HCT116 (cell line): ENCODE measurements at regions of chr10 and their contacts with region 1.

Region 1: DNA sequence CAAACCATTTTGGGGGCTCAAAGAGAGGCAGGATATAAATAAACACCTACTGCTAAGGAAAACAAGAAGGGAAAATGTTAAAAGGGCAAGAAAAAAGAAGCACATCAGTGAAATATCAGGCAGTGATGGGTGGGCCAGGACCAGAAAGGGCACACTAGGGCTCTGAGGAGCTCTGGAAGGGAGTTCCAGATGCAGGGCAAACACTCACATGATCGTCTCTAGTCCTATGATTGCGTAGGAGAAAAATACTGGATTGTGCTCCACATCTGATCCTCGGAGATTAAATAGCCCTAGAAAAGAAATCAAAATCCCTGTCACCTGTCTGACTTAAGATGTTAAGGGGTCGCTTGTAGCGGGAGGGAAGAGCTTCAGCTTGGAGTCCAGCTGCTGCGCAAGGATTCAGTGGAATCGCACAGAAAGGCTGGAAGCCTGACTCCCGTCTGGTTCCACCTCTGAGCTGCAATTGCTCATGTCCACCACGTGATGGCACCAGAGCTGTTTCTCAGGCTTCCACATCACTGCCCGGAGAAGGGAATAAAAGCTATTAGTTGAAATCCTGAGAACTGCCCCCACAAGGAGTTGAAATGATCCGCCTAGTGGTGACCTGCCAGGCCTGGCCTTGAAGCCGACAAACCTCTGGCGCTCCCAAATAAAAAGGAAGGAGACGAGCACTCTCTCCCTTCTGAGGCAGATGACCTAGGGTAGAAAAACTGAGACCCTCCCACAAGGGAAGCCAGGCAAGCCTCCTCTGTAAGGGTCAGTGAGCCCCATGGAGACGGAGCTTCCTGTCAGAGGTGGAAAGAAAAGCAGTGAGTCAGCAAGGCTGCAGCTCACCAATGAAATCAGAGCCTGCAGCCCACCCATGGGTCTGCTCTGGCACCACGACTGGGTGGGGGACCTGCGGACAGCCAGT is 39.2 kb downstream of the XPNPEP1 start:
- DNase-seq: peak; percentile 88
- ATAC-seq: peak; percentile 94
- H3K4me3 ChIP-seq: no peak overlapping the region
- H3K27ac ChIP-seq: peak overlapping the region; percentile 50
- H3K4me1 ChIP-seq: peaks cover 7 to 8% of the 10 kb centered on the region in 2 experiments
- H3K27me3 ChIP-seq: no peaks in the 10 kb centered on the region
- CTCF ChIP-seq: peak; percentile 98 to 100 (median 99)
- POLR2A ChIP-seq: no peak
- RAD21 ChIP-seq: peak; percentile 97

Region 2: GRCh38 chr10:109978481-109978880 is 94.4 kb after region 1 on chr10:
- CTCF ChIA-PET with region 1: interaction called, 10 read pairs
- POLR2A ChIA-PET with region 1: no interaction called
- RAD21 ChIA-PET with region 1: no interaction called
- intact Hi-C with region 1: no loop called
- DNase-seq: peak; percentile 37
- ATAC-seq: peak; percentile 87
- H3K4me3 ChIP-seq: no peak overlapping the region
- H3K27ac ChIP-seq: no peak overlapping the region
- H3K4me1 ChIP-seq: no peaks in the 10 kb centered on the region
- H3K27me3 ChIP-seq: 0 out of 2 replicates have a peak, but pooled peaks cover 5% of the 10 kb centered on the region
- CTCF ChIP-seq: peak; percentile 70 to 99 (median 93)
- POLR2A ChIP-seq: no peak
- RAD21 ChIP-seq: peak; percentile 69

Region 3: GRCh38 chr10:110016039-110016438 is 131.9 kb after region 1 on chr10:
- CTCF ChIA-PET with region 1: interaction called, 17 read pairs
- POLR2A ChIA-PET with region 1: no interaction called
- RAD21 ChIA-PET with region 1: interaction called, 6 to 9 read pairs
- intact Hi-C with region 1: loop called (anchors 1 kb)
- DNase-seq: no peak
- ATAC-seq: peak; percentile 81
- H3K4me3 ChIP-seq: no peak overlapping the region
- H3K27ac ChIP-seq: no peak overlapping the region
- H3K4me1 ChIP-seq: peaks cover 18 to 26% of the 10 kb centered on the region in 2 experiments
- H3K27me3 ChIP-seq: no peaks in the 10 kb centered on the region
- CTCF ChIP-seq: peak; percentile 31 to 61 (median 39); a peak in 4 of 6 replicates
- POLR2A ChIP-seq: no peak
- RAD21 ChIP-seq: peak; percentile 62

Region 4: DNA sequence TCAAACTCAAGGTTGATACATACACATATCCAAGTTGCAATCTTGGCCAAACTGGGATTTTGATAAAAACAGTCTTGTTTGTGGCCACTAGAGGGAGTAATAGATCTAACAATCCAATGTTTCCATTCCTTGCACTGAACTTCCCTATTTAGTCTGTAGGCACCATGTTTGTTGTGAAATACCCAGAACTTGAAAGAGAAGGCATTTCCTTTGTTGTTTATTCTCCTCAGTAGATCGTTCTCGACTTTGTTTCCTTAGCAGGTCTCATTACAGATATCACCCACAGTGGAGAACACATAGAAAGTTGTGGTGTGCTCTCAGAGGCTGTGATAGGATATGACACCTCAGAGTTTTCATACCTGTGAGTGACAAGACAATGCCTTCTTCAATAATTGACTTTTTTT is 253.0 kb after region 1 on chr10:
- CTCF ChIA-PET with region 1: interaction called, 16 read pairs
- POLR2A ChIA-PET with region 1: no interaction called
- RAD21 ChIA-PET with region 1: no interaction called
- intact Hi-C with region 1: loop called (anchors 1 kb)
- DNase-seq: peak; percentile 55
- ATAC-seq: peak; percentile 82
- H3K4me3 ChIP-seq: no peak overlapping the region
- H3K27ac ChIP-seq: no peak overlapping the region
- H3K4me1 ChIP-seq: peaks cover 0 to 2% of the 10 kb centered on the region in 2 experiments; a peak in 1 of 4 replicates
- H3K27me3 ChIP-seq: no peaks in the 10 kb centered on the region
- CTCF ChIP-seq: peak; percentile 77 to 98 (median 91)
- POLR2A ChIP-seq: no peak
- RAD21 ChIP-seq: peak; percentile 95

Region 5: DNA sequence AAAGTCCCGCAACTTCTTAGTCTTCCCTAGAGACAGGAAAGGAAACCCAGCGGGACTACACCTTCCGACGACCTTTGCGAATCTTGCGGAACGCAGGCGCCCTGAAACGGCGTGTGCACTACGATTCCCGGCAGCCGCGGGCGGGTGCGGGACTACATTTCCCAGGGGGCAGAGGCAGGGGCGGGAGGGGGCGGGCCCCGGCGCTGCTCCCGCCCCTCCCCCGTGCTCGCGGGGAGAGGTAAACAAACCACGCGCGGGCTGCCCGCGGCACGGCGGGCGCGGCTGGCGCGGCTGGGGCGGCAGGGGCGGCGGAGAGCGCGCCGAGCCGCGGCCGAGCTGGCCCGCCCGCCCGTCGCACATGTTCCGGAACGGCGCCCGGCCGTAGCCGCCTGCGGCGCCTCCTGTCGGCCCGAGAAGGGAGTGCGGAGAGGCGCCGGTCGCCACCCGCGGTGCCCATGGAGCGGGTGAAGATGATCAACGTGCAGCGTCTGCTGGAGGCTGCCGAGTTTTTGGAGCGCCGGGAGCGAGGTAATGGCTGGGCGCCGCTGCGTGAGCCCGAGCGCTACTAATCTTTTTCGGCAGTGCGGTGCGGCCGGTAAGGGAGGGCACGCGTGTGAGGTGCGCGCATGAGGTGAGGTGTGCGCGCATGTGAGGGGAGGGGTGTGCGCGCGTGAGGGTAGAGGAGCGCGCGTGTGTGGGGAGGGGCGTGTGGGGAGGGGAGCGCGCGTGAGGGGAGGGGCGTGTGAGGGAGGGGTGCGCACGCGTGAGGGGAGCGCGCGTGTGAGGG is 341.8 kb after region 1 on chr10:
- CTCF ChIA-PET with region 1: interaction called, 13 read pairs
- POLR2A ChIA-PET with region 1: no interaction called
- RAD21 ChIA-PET with region 1: interaction called in 1 of 2 experiments, 5 read pairs
- intact Hi-C with region 1: loop called (anchors 1 kb)
- DNase-seq: peak; percentile 92
- ATAC-seq: peak; percentile 83
- H3K4me3 ChIP-seq: peak overlapping the region; percentile 56 to 63
- H3K27ac ChIP-seq: peak overlapping the region; percentile 93
- H3K4me1 ChIP-seq: peaks cover 24 to 34% of the 10 kb centered on the region in 2 experiments
- H3K27me3 ChIP-seq: no peaks in the 10 kb centered on the region
- CTCF ChIP-seq: peak in 2 of 3 experiments; percentile 64 to 82; a peak in 4 of 6 replicates
- POLR2A ChIP-seq: no peak
- RAD21 ChIP-seq: no peak